PC-3 (cell line): ENCODE measurements at regions of chr17 and their contacts with region 1.

Region 1: DNA sequence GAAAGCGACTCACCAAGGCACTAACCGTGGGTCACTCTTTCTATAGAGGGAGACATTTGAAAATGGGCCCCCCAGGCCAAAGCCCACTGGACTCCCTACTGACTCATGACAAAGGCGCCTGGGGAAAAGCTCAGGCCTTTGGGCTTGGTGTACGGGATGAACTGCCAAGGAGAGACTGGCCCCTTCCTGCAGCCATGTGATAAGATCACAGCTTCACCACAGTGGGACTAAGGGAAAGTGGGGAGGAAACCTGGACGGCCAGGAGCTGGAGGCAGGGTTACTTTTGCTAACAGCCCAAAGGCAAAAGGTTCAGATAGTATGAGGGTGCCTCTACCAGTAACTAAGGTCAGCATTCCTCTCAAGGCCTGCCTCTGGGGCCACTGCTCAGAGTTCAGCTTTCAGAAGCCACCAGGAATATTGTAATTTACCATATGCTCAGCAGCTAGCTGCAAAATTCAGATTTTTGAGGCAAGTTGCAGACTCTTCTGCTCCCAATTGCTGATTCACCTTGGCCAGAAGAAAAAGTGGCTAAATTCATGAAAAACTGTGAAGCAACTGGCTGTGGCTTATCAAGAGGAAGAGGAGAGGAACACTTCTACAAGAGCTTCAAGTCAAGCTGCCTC is 37.1 kb upstream of the SLC25A19 start:
- DNase-seq: no peak
- ATAC-seq: no peak
- H3K4me3 ChIP-seq: no peak overlapping the region
- H3K27ac ChIP-seq: no peak overlapping the region
- H3K4me1 ChIP-seq: no peaks in the 10 kb centered on the region
- H3K27me3 ChIP-seq: no peaks in the 10 kb centered on the region
- CTCF ChIP-seq: no peak

Region 2: DNA sequence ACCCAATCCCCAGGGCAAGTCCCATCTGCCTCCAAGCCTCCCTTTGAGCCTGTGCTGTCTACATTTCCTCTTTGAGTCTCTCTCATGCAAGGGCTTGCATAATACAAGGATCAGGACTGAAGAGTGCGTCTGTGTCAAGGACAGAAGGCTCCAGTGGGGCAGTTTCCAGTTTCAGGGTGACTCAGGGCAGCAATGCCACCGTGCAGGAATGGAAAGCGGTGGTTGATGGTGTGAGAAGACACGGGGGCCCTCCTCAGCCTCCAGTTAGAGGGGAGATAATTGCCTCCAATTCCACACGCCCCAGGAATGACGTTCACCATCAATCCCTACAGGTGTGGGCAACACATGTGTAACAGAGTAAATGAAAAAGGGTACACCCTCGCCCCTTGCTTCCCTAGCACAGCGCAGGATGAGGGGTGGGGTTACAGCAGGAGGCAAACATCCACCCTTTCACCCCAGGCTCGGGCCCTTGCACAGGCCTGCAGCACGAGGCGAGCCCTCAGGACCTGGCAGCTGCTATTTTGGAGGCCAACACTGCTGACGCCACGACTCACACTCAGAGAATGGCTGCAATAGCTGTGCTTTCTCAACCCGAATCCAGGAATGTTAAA is 12.3 kb before region 1 on chr17:
- CTCF ChIA-PET with region 1: interaction called, 10 read pairs
- POLR2A ChIA-PET with region 1: no interaction called
- intact Hi-C with region 1: no loop called
- DNase-seq: no peak
- ATAC-seq: no peak
- H3K4me3 ChIP-seq: no peak overlapping the region
- H3K27ac ChIP-seq: no peak overlapping the region
- H3K4me1 ChIP-seq: no peaks in the 10 kb centered on the region
- H3K27me3 ChIP-seq: no peaks in the 10 kb centered on the region
- CTCF ChIP-seq: no peak